ENCODE measurements at regions of chr3 and their contacts with region 1.

Region 1: DNA sequence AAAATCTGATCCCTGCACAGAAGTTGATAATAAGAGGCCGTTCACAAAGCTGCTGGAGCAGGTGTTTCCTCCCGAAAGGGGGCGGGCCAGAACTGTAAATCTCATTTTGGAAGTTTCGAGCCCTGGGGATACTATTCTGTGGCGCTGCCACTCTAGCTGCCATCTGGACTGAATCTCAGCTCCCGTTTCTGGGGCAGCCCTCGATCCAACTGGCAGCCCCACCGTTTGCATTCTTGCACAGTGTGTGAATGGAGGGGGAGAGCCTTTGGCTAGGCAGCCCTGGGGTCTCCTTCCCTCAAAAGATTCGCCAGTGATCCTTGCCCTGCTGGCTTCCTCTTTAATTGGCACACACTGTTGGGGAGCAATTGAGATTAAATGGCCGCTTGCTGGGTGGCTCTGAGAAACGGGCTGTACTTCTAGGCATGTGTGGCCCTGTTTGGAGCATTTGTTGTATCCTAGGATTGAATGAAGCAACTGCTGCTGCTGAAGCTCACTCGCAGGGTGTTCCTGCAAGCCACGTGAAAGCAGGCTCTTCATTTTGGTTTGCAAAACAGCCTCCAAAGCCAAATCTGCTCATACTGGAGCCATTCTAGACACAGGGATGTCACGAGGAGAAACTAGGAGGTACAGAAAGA is 57.2 kb upstream of the TOPAZ1 start:
- DNase-seq: peak; percentile 44 to 92 (median 84)
- H3K4me3 ChIP-seq: peak overlapping the region in 2 of 7 experiments; percentile 16 to 46
- H3K27ac ChIP-seq: no peak overlapping the region
- H3K4me1 ChIP-seq: peaks cover 2 to 16% (median 12%) of the 10 kb centered on the region in 4 experiments
- H3K27me3 ChIP-seq: no peaks in the 10 kb centered on the region

Region 2: GRCh38 chr3:44198284-44199269 is 14.1 kb after region 1 on chr3:
- CTCF ChIA-PET with region 1: interaction called, 32 read pairs
- POLR2A ChIA-PET with region 1: no interaction called
- DNase-seq: peak; percentile 67 to 86 (median 81)
- H3K4me3 ChIP-seq: no peak overlapping the region
- H3K27ac ChIP-seq: no peak overlapping the region
- H3K4me1 ChIP-seq: peaks cover 0 to 4% (median 0%) of the 10 kb centered on the region in 4 experiments
- H3K27me3 ChIP-seq: no peaks in the 10 kb centered on the region

Region 3: DNA sequence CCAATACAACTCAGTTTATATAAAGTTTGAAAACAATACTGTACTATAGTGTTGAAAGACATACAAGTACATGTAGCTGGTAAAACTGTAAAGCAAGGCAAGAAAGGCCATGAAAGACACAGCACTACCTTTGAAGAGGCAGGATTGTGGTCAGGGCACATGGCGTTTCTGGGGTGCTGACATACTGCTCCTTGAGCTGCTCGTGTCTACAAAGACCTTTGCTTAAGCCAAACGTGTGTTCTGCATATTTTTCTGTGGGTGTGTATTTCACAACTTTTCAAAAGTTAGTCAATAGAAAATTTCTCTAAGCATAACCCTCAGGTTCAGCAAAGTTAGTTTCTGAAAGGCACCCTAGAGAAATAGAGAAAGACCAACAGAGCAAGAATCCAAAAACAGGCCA is 43.2 kb after region 1 on chr3:
- CTCF ChIA-PET with region 1: no interaction called
- POLR2A ChIA-PET with region 1: no interaction called
- DNase-seq: no peak
- H3K4me3 ChIP-seq: no peak overlapping the region
- H3K27ac ChIP-seq: no peak overlapping the region
- H3K4me1 ChIP-seq: peaks cover 2 to 24% (median 10%) of the 10 kb centered on the region in 4 experiments
- H3K27me3 ChIP-seq: no peaks in the 10 kb centered on the region